Dendritic cell treated with granulocyte-macrophage colony-stimulating factor and Interleukin-4, amounts not matched to agents 40 ng/mL and 50 ng/mL, for 4 days (primary cell): ENCODE measurements at regions of chr1 and their contacts with region 1.

Region 1: GRCh38 chr1:244583358-244583982 is 69.5 kb upstream of the DESI2 start:
- H3K4me3 Mint-ChIP-seq: no peak overlapping the region
- H3K27ac Mint-ChIP-seq: no peak overlapping the region
- H3K4me1 Mint-ChIP-seq: no peaks in the 10 kb centered on the region
- H3K27me3 Mint-ChIP-seq: no peaks in the 10 kb centered on the region

Region 2: GRCh38 chr1:244614113-244614836 is 30.8 kb after region 1 on chr1:
- intact Hi-C with region 1: loop called (anchors 1 kb)
- H3K4me3 Mint-ChIP-seq: no peak overlapping the region
- H3K27ac Mint-ChIP-seq: no peak overlapping the region
- H3K4me1 Mint-ChIP-seq: no peaks in the 10 kb centered on the region
- H3K27me3 Mint-ChIP-seq: no peaks in the 10 kb centered on the region

Region 3: DNA sequence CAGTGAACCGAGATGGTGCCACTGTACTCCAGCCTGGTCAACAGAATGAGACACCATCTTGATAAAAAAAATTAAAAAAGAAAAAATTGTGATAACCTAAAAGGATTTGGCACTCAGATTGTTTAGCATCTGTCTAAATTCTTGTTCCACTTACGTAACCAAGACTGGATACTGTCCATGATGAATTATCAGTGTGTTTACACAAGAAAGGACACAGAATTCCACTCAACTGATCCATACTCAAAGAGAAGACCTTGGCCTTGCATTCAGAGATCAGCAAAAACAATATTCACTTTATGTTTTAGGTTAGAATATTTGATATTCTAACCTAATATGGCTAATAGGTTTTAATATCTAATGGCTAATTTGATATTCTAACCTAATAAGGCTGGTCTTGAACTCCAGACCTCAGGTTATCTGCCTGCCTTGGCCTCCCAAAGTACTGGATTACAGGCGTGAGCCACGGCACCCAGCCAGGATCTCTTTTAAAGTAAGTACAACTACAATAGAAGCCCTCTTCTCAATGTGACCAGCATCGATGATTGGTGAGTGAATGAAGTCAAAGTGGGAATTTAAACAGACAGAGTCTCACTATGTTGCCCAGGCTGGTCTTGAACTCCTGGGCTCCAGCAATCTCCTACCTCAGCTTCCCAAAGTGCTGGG is 208.8 kb after region 1 on chr1:
- intact Hi-C with region 1: no loop called
- H3K4me3 Mint-ChIP-seq: no peak overlapping the region
- H3K27ac Mint-ChIP-seq: no peak overlapping the region
- H3K4me1 Mint-ChIP-seq: no peaks in the 10 kb centered on the region
- H3K27me3 Mint-ChIP-seq: peaks cover 3% of the 10 kb centered on the region